ENCODE measurements at regions of chr3 and their contacts with region 1.

Region 1: GRCh38 chr3:48507351-48508061 is 3.5 kb upstream of the SHISA5 start:
- DNase-seq: peak; percentile 98
- ATAC-seq: peak; percentile 68
- H3K4me3 ChIP-seq: peak overlapping the region; percentile 44; the same call in 1 of the 2 replicates
- H3K27ac ChIP-seq: peak overlapping the region; percentile 97
- H3K4me1 ChIP-seq: peaks cover 54% of the 10 kb centered on the region
- H3K27me3 ChIP-seq: no peaks in the 10 kb centered on the region
- CTCF ChIP-seq: peak; percentile 66

Region 2: GRCh38 chr3:48415554-48415953 is 92.0 kb before region 1 on chr3:
- CTCF ChIA-PET with region 1: no interaction called
- POLR2A ChIA-PET with region 1: no interaction called
- intact Hi-C with region 1: no loop called
- DNase-seq: no peak
- ATAC-seq: no peak
- H3K4me3 ChIP-seq: no peak overlapping the region
- H3K27ac ChIP-seq: no peak overlapping the region
- H3K4me1 ChIP-seq: no peaks in the 10 kb centered on the region
- H3K27me3 ChIP-seq: no peaks in the 10 kb centered on the region
- CTCF ChIP-seq: 0 out of 2 replicates have a peak, but pooled peaks have one; percentile 15

Region 3: GRCh38 chr3:48465531-48466378 is 41.8 kb before region 1 on chr3:
- CTCF ChIA-PET with region 1: interaction called, 5 read pairs
- POLR2A ChIA-PET with region 1: no interaction called
- intact Hi-C with region 1: loop called (anchors 1 kb)
- DNase-seq: peak; percentile 99
- ATAC-seq: peak; percentile 94
- H3K4me3 ChIP-seq: peak overlapping the region; percentile 51
- H3K27ac ChIP-seq: peak overlapping the region; percentile 99
- H3K4me1 ChIP-seq: peaks cover 31% of the 10 kb centered on the region
- H3K27me3 ChIP-seq: no peaks in the 10 kb centered on the region
- CTCF ChIP-seq: peak; percentile 94

Region 4: DNA sequence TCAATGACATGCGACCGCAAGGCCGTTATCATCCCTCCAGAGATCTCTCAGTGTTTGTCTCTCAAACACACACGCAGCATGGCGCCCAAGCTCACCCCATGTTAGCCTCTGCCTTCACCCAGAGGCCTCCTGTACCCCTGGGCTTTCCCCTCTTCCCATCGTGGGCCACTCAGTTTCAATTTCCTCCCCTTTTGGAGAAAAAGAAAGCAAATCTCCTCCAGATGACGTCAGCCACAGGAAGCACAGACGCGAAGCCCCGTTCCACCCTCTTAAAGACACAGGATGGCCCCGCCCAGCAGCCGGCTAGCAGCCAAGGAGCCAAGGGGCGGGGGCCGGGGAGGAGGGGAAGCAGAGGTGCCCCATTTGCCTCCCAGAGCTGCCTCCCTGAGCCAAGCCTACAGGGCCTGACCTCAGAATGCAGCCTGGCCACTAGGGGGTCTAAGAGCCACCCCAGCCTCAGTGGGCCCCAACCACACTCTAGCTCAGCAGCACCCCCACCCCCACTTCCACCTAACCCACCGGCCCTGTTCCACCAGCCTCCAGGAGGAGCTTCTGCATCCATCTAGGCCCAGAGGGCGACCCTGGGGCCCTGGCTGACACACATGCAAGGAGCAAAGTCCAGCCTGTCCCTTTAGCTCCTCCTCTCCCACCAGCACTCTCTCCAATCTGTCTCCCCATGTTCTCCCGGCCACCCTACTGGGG is 34.4 kb before region 1 on chr3:
- CTCF ChIA-PET with region 1: no interaction called
- POLR2A ChIA-PET with region 1: no interaction called
- intact Hi-C with region 1: loop called (anchors 2 kb)
- DNase-seq: peak; percentile 90
- ATAC-seq: peak; percentile 84
- H3K4me3 ChIP-seq: peak overlapping the region; percentile 79
- H3K27ac ChIP-seq: peak overlapping the region; percentile 92
- H3K4me1 ChIP-seq: peaks cover 20% of the 10 kb centered on the region
- H3K27me3 ChIP-seq: no peaks in the 10 kb centered on the region
- CTCF ChIP-seq: peak; percentile 59

Region 5: GRCh38 chr3:48528754-48529153 is 21.2 kb after region 1 on chr3:
- CTCF ChIA-PET with region 1: interaction called, 12 read pairs
- POLR2A ChIA-PET with region 1: no interaction called
- intact Hi-C with region 1: no loop called
- DNase-seq: no peak
- ATAC-seq: no peak
- H3K4me3 ChIP-seq: no peak overlapping the region
- H3K27ac ChIP-seq: no peak overlapping the region
- H3K4me1 ChIP-seq: no peaks in the 10 kb centered on the region
- H3K27me3 ChIP-seq: no peaks in the 10 kb centered on the region
- CTCF ChIP-seq: no peak

Region 6: GRCh38 chr3:48548729-48549705 is 41.5 kb after region 1 on chr3:
- CTCF ChIA-PET with region 1: no interaction called
- POLR2A ChIA-PET with region 1: no interaction called
- intact Hi-C with region 1: loop called (anchors 2 kb)
- DNase-seq: peak; percentile 90
- ATAC-seq: peak; percentile 99
- H3K4me3 ChIP-seq: no peak overlapping the region
- H3K27ac ChIP-seq: no peak overlapping the region
- H3K4me1 ChIP-seq: no peaks in the 10 kb centered on the region
- H3K27me3 ChIP-seq: no peaks in the 10 kb centered on the region
- CTCF ChIP-seq: peak; percentile 97

Region 7: DNA sequence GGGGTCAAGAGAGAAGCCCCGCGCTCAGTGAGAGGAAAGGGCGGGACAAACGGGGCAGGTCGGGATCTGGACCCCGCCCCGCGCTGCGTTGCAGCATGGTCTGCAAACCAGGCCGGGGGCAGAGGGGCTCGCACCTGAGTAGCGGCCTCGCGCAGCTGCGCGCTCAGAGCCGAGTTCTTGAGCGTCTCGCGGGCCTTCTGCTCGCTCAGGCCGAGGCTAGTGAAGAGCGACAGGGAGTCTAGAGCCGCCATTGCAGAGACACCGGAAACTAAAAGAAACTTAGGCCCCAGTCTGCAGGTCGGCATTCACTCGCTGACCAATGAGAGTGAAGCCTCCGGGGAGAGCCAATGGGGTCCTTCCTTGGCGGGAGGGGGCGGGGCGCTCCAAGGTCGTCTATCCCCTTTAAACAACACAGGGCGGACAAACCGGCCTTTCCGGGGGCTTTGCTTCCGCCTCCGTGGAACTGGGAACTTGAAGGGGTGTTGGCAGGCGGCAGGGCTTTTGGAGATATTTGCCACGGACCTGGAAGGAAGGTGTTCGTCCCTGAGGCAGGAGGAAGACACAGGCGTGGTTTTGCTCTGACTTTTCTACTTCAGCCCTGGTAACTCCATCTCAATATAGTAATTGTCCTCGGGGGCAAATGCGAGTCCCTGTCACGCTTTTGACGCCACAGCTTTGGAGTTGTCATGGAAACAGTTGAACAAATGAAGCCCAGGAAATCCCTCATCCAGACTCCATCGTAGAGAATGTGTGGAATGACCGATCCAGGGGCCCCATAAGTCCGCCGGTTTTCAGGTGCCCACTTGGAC is 597.2 kb after region 1 on chr3 and contains the start of gene QARS1:
- CTCF ChIA-PET with region 1: no interaction called
- POLR2A ChIA-PET with region 1: no interaction called
- intact Hi-C with region 1: no loop called
- DNase-seq: peak; percentile 90
- ATAC-seq: peak; percentile 98
- H3K4me3 ChIP-seq: peak within 1 kb of the TSS; percentile 91
- H3K27ac ChIP-seq: peak within 1 kb of the TSS; percentile 67
- H3K4me1 ChIP-seq: peaks cover 21% of the 10 kb centered on the region
- H3K27me3 ChIP-seq: no peaks in the 10 kb centered on the region
- CTCF ChIP-seq: no peak
- total RNA-seq, gene QARS1: 310 and 316 TPM in 2 replicates

Measured in PC-3 (cell line).